IMR-90 (cell line): ENCODE measurements at regions of chr1 and their contacts with region 1.

Region 1: DNA sequence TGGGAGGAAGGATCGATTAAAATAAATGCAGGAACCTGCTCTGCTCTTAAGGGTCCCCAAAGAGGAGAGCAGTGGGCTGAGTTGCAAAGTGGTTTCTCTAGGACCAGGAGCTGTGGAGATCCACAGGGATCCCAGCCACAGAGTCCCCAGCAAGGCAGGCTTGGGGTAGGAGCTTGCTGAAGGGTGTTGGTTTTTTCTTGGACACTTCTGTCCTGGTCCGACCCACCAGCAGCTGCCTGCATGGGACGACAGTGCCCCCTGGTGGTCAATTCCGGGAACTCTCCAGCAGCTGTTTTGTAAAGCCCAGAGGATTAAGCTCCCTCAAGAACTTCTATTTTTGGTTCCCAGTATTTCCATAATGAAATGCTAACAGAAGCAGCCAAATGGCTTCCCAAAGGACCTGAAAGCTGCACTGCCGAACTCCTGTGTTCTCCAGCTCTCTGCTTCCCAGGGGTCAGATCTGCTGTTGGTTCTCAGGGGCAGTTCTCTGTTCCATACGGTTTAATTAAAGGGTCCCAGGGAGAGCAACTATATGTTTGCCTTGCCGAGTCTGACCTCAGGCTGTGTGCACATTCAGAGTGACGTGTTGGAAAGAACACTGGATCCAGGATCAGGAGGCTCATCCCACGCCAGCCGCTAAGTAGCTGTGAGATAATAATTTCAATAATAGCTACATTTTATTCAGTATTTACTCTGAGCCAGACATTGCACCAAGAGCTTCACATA is 23.2 kb downstream of the NENF start:
- DNase-seq: peak; percentile 82
- ATAC-seq: peak; percentile 90
- H3K4me3 ChIP-seq: no peak overlapping the region
- H3K27ac ChIP-seq: no peak overlapping the region
- H3K4me1 ChIP-seq: peaks cover 4% of the 10 kb centered on the region; the same call in 1 of the 2 replicates
- H3K27me3 ChIP-seq: no peaks in the 10 kb centered on the region
- CTCF ChIP-seq: peak; percentile 96
- POLR2A ChIP-seq: no peak
- RAD21 ChIP-seq: peak; percentile 98

Region 2: DNA sequence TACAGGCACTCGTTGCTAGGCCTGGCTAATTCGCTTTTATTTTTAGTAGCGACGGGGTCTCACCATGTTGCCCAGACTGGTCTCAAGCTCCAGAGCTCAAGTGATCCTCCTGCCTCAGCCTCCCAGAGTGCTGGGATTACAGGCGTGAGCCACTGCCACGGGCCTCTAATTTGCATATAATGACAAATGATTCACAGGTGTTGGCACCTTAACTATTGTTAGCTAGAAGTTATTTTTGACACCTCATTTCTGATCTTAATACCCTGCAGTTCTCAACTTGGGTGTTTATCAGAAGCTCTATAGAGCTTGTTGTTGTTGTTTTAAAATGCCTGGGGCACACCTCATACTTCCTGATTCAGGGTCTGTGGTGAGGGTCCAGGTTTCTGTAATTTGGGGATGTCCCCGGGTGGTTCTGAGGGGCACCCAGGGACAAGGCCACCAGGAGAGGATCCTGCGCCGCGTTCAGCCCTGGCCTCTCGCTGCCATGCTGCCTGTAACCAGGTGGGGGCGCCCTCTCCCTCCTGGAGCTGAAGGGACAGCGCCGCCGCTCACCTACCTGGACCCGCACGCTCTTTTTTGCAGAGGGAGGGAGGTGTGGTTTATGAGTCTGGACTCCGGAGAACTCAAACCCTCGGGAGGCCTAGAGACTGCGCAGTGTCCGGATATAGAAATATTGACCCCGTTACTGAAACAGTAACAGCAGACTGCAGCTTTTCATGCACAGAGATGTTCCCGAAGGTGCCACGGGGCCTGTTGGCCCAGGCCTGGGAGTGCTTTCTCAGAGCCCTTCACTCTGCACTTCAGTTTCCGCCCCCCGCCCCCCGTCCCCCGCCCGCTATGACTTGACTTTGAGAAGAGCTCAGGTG is 757.6 kb before region 1 on chr1:
- CTCF ChIA-PET with region 1: interaction called, 4 read pairs
- POLR2A ChIA-PET with region 1: no interaction called
- dilution Hi-C with region 1: no loop called
- in situ Hi-C with region 1: no loop called
- intact Hi-C with region 1: loop called (anchors 5 kb)
- DNase-seq: peak; percentile 41
- ATAC-seq: peak; percentile 98
- H3K4me3 ChIP-seq: no peak overlapping the region
- H3K27ac ChIP-seq: no peak overlapping the region
- H3K4me1 ChIP-seq: no peaks in the 10 kb centered on the region
- H3K27me3 ChIP-seq: peaks cover 18% of the 10 kb centered on the region
- CTCF ChIP-seq: peak; percentile 92
- POLR2A ChIP-seq: no peak
- RAD21 ChIP-seq: peak; percentile 85

Region 3: GRCh38 chr1:212062832-212063438 is 393.0 kb before region 1 on chr1:
- CTCF ChIA-PET with region 1: interaction called, 22 read pairs
- POLR2A ChIA-PET with region 1: no interaction called
- dilution Hi-C with region 1: no loop called
- in situ Hi-C with region 1: loop called (anchors 5 kb)
- intact Hi-C with region 1: loop called (anchors 1 kb)
- DNase-seq: peak; percentile 57
- ATAC-seq: peak; percentile 80
- H3K4me3 ChIP-seq: no peak overlapping the region
- H3K27ac ChIP-seq: no peak overlapping the region
- H3K4me1 ChIP-seq: no peaks in the 10 kb centered on the region
- H3K27me3 ChIP-seq: no peaks in the 10 kb centered on the region
- CTCF ChIP-seq: peak; percentile 69
- POLR2A ChIP-seq: no peak
- RAD21 ChIP-seq: peak; percentile 62

Region 4: DNA sequence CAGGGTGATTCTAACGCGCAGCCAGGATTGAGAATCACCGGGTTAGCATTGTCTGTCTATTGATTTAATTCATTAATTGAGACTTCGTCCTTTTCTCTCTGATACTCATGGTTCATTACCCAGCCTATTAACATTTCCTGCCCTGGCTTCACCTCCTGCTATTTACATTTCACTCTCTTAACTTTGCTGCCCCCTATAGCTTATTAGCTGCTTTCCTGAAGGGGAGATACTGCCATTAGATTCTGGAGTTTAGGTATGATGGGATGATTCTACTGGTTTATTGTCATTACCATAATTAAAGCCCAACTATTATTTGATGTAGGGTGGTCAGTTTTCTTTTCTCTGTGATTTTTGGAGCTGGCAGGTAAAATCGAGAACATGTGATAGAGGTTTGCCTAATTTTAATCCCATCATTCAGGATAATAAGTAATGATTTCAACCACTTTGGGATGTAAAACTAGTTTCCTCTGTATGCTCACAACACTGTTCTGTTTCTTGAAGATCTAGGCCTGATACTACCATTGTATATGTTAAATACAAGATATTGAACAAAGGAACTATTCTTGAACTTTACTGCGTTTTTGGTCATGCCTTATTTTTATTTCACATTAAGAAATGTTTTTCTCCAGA is 164.3 kb before region 1 on chr1:
- CTCF ChIA-PET with region 1: interaction called, 6 read pairs
- POLR2A ChIA-PET with region 1: no interaction called
- dilution Hi-C with region 1: no loop called
- in situ Hi-C with region 1: loop called (anchors 10 kb)
- intact Hi-C with region 1: loop called (anchors 2 kb)
- DNase-seq: peak; percentile 44
- ATAC-seq: peak; percentile 66
- H3K4me3 ChIP-seq: no peak overlapping the region
- H3K27ac ChIP-seq: no peak overlapping the region
- H3K4me1 ChIP-seq: peaks cover 6% of the 10 kb centered on the region
- H3K27me3 ChIP-seq: no peaks in the 10 kb centered on the region
- CTCF ChIP-seq: peak; percentile 76
- POLR2A ChIP-seq: no peak
- RAD21 ChIP-seq: peak; percentile 81